Activated CD8-positive, alpha-beta T cell treated with anti-CD3 and anti-CD28 coated beads, Interleukin-2, amount 10 ng/mL, durations not matched to agents 7 days and 5 days (primary cell): ENCODE measurements at regions of chr21 and their contacts with region 1.

Region 1: DNA sequence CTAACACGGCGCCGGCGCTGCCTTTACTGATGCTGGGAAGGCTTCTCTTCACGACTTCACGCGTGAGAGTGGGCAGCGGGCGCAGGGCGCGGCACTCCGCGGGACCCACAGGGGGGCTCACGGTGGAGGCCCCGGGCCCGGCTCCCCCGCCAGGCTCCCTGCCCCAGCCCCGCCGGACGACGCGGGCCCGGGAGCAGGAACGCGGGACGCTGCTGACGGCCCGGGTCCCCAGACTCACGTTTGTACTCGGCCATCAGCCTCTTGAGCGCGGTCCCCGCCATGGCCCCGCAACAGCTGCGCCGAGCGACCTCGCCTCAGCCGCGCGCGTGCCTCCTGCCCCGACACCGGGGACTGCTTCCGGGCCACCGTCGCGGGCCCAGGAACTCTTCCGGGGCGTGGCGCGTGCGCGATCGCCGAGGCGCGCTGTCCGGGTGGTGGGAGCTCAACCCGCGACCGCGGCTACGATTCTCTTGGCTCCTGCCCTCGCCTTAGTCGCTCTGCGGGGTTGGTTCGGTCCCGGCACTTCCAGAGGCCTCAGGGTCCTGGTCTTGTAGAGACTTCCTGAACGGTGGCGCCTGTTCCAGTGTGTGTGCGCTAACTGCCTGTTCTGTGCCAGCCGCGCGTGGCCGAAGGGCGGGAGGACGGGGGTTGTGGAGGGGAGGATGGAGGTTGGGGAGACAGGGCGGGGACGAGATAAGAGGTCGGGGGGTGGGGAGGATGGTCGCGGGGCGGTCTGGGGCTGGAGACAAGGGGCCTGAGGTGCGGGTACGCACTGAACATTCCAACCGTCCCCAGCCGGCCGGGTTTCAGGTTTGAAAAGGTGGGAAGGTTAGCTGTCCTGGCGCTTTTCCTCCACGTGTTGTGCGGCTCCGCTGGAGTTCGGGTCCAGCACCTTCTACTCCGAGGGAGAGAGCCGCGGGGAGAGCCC is at the start of gene UBE2G2:
- DNase-seq: peak; percentile 88
- ATAC-seq: peak; percentile 96
- H3K4me3 Mint-ChIP-seq: peak within 1 kb of the TSS; percentile 93
- H3K27ac Mint-ChIP-seq: peak within 1 kb of the TSS; percentile 89
- H3K4me1 Mint-ChIP-seq: peaks cover 55% of the 10 kb centered on the region
- H3K27me3 Mint-ChIP-seq: no peaks in the 10 kb centered on the region
- total RNA-seq, gene UBE2G2: 85.5 to 86.0 TPM

Region 2: DNA sequence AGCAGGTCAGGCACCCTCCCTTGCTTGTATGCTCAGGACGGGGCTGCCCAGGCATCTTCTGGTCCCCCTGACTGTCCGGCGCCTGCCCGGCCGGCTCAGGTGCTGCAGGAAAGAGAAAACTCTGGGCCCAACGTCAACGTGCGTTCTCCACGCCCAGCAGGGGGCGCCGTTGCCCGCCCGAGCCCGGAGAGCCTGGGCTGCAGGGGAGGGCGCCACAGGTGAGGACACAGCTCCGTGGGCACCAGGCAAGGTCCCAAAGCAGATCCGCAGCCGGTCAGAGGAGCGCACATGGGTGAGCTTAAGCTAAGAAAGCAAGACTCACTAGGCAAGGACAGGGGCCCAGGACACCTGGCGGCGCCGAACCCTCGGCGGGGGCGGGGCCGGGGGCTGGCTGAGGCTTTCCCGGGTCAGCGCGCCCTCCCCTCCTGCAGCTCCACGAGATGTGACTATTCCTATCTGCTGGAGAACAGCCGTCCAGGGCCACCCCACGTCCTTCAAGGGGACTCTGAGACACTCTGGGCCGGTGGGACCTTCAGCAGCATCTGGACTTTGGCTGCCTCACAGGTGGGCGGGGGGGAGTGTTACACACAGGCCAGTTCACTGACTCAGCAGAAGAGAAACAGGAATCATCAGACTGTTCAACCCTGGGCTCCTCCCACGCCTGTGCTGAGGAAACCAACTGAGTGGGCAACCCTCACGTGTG is 291.1 kb before region 1 on chr21:
- CTCF ChIA-PET with region 1: interaction called, 24 read pairs
- POLR2A ChIA-PET with region 1: no interaction called
- DNase-seq: peak; percentile 81
- ATAC-seq: peak; percentile 93
- H3K4me3 Mint-ChIP-seq: peak overlapping the region; percentile 22
- H3K27ac Mint-ChIP-seq: no peak overlapping the region
- H3K4me1 Mint-ChIP-seq: peaks cover 2% of the 10 kb centered on the region
- H3K27me3 Mint-ChIP-seq: no peaks in the 10 kb centered on the region

Region 3: GRCh38 chr21:44822484-44823178 is 20.9 kb after region 1 on chr21:
- CTCF ChIA-PET with region 1: interaction called, 10 read pairs
- POLR2A ChIA-PET with region 1: interaction called, 3 read pairs
- DNase-seq: no peak
- ATAC-seq: no peak
- H3K4me3 Mint-ChIP-seq: no peak overlapping the region
- H3K27ac Mint-ChIP-seq: no peak overlapping the region
- H3K4me1 Mint-ChIP-seq: no peaks in the 10 kb centered on the region
- H3K27me3 Mint-ChIP-seq: peaks cover 12% of the 10 kb centered on the region

Region 4: GRCh38 chr21:44911389-44912157 is 109.8 kb after region 1 on chr21:
- CTCF ChIA-PET with region 1: interaction called, 16 read pairs
- POLR2A ChIA-PET with region 1: interaction called, 5 read pairs
- DNase-seq: peak; percentile 79
- ATAC-seq: peak; percentile 66
- H3K4me3 Mint-ChIP-seq: peak overlapping the region; percentile 73
- H3K27ac Mint-ChIP-seq: peak overlapping the region; percentile 80
- H3K4me1 Mint-ChIP-seq: peaks cover 80% of the 10 kb centered on the region
- H3K27me3 Mint-ChIP-seq: no peaks in the 10 kb centered on the region

Region 5: GRCh38 chr21:44939532-44940115 is 137.9 kb after region 1 on chr21 and contains the start of gene SLX9:
- CTCF ChIA-PET with region 1: interaction called, 81 read pairs
- POLR2A ChIA-PET with region 1: no interaction called
- DNase-seq: peak; percentile 81
- ATAC-seq: peak; percentile 92
- H3K4me3 Mint-ChIP-seq: peak within 1 kb of the TSS; percentile 86
- H3K27ac Mint-ChIP-seq: peak within 1 kb of the TSS; percentile 84
- H3K4me1 Mint-ChIP-seq: peaks cover 52% of the 10 kb centered on the region
- H3K27me3 Mint-ChIP-seq: no peaks in the 10 kb centered on the region
- total RNA-seq, gene SLX9: 56.6 to 60.4 TPM

Region 6: GRCh38 chr21:45087022-45087823 is 285.5 kb after region 1 on chr21:
- CTCF ChIA-PET with region 1: no interaction called
- POLR2A ChIA-PET with region 1: no interaction called
- DNase-seq: peak; percentile 72
- ATAC-seq: peak; percentile 59
- H3K4me3 Mint-ChIP-seq: peak overlapping the region; percentile 44
- H3K27ac Mint-ChIP-seq: peak overlapping the region; percentile 78
- H3K4me1 Mint-ChIP-seq: peaks cover 86% of the 10 kb centered on the region
- H3K27me3 Mint-ChIP-seq: no peaks in the 10 kb centered on the region